ENCODE measurements at regions of chr14 and their contacts with region 1.

Region 1: GRCh38 chr14:67704484-67705089 is 2.9 kb downstream of the RDH12 start:
- DNase-seq: peak; percentile 30
- H3K4me3 Mint-ChIP-seq: no peak overlapping the region
- H3K27ac Mint-ChIP-seq: no peak overlapping the region
- H3K4me1 Mint-ChIP-seq: no peaks in the 10 kb centered on the region
- H3K27me3 Mint-ChIP-seq: peaks cover 14% of the 10 kb centered on the region

Region 2: DNA sequence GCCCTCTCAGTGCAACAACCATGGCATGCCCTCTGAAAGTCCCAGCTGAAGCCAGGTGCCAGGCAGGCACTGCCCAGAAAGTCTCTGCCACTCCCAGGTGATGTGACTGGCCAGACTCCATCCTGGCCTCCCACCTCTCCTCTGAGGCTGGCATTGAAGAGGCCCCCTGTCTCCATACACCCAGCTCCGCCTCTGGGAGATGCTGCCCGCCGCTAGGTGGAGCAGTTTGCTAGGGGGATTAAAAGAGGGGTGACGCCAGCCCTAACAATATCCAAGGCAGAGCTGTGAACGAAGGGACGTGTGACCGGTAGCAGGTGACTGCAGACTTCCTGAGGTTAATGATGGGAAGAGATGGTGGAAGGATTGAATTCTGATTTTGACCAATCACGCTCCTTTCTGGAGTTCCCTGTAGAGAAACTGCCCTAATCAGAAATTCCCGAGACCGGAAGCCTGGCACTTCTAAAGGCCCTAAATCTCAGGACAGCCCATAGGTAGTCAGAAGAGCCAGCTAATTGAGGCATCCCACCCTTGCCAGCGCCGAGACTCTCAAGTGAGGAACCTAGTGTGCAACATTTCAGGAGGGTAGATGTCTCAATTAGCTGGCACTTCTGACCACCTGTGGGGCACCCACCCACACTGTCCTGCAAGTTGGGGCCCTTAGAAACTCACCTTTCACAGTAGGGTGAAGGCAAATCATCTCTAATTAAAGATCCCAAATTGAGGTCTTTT is 284.3 kb before region 1 on chr14:
- CTCF ChIA-PET with region 1: interaction called, 11 read pairs
- POLR2A ChIA-PET with region 1: no interaction called
- DNase-seq: peak; percentile 50
- H3K4me3 Mint-ChIP-seq: no peak overlapping the region
- H3K27ac Mint-ChIP-seq: no peak overlapping the region
- H3K4me1 Mint-ChIP-seq: peaks cover 5% of the 10 kb centered on the region
- H3K27me3 Mint-ChIP-seq: peaks cover 12% of the 10 kb centered on the region

Region 3: DNA sequence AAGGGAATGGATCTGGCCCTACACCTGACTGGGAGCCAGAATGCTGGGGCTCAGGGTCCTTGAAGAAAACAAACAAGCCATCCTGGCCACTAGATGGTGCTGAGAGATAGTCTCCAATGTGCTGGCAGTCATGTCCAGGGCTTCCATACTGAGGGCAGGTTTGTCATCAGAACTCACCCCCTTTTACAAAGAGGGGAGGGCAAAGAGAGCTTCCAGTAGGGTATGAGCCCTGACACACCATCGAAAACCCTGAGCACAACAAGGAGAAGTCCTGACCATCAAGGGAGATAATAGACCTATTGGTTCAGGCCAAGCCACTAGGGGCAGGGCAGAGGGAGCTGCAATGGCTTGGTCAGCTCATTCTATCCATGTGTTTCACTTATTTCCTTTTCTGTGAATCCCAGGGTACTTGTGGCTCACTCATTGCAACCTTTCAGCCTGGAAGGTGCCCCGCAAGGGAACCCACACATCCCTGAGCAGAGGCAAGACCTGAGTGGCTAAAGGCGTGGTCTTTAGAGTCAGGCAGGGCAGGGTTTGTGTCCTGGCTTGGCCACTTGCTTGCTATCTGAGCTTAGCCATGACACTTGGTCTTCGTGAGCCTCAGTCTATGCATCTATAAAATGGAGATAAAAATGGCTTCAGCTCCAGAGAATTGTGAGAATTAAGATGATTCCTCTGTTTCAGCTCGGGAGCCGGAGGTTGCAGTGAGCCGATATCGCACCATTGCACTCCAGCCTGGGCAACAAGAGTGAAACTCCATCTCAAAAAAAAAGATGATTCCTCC is 177.7 kb before region 1 on chr14:
- CTCF ChIA-PET with region 1: interaction called, 13 read pairs
- POLR2A ChIA-PET with region 1: no interaction called
- DNase-seq: peak; percentile 42
- H3K4me3 Mint-ChIP-seq: no peak overlapping the region
- H3K27ac Mint-ChIP-seq: no peak overlapping the region
- H3K4me1 Mint-ChIP-seq: no peaks in the 10 kb centered on the region
- H3K27me3 Mint-ChIP-seq: peaks cover 62% of the 10 kb centered on the region

Region 4: GRCh38 chr14:67583711-67584644 is 120.6 kb before region 1 on chr14:
- CTCF ChIA-PET with region 1: interaction called, 25 read pairs
- POLR2A ChIA-PET with region 1: no interaction called
- DNase-seq: peak; percentile 26
- H3K4me3 Mint-ChIP-seq: no peak overlapping the region
- H3K27ac Mint-ChIP-seq: no peak overlapping the region
- H3K4me1 Mint-ChIP-seq: peaks cover 12% of the 10 kb centered on the region
- H3K27me3 Mint-ChIP-seq: no peaks in the 10 kb centered on the region

Region 5: GRCh38 chr14:67619446-67620216 is 85.0 kb before region 1 on chr14 and contains the start of gene ARG2:
- CTCF ChIA-PET with region 1: interaction called, 88 read pairs
- POLR2A ChIA-PET with region 1: interaction called, 6 read pairs
- DNase-seq: peak; percentile 96
- H3K4me3 Mint-ChIP-seq: peak within 1 kb of the TSS; percentile 78
- H3K27ac Mint-ChIP-seq: peak within 1 kb of the TSS; percentile 59
- H3K4me1 Mint-ChIP-seq: peaks cover 32% of the 10 kb centered on the region
- H3K27me3 Mint-ChIP-seq: peaks cover 17% of the 10 kb centered on the region
- total RNA-seq, gene ARG2: 6.8 to 7.7 TPM

Region 6: DNA sequence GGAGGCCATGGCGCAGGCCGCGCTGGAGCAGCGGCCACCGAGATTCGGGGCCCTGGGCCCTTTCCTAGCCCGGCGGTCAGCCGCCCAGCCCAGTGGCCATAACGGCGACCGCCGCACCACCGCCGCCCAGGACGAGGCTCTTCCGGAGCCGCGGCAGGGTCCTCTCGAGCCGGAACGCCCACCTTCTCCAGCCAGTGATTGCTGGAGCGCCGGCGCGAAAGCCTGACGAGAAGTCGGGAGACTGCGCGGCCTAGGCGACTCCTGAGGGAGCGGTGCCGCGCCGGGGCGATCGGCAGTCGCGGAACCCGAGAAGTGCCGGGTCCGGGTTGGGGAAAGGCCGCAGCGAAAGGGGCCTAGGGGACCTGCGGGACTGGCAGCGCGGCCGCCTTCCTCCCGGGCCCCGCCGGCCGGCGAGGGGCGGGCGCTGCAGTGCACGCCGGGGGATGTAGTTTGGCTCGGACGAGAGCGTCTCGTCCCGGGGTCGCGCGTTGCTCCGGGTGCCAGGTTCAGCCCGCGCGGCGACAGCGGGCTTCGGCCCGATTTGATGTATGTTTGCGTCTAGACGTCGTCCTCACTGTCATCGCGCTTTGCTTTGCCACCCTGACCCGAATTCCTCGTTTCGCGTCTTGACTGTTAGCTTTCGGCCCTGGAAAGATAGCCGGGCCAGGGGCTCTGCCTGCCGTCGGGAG is 30.0 kb before region 1 on chr14 and contains the start of gene VTI1B:
- CTCF ChIA-PET with region 1: interaction called, 11 read pairs
- POLR2A ChIA-PET with region 1: interaction called, 4 read pairs
- DNase-seq: peak; percentile 77
- H3K4me3 Mint-ChIP-seq: peak within 1 kb of the TSS; percentile 80
- H3K27ac Mint-ChIP-seq: peak within 1 kb of the TSS; percentile 75
- H3K4me1 Mint-ChIP-seq: peaks cover 32% of the 10 kb centered on the region
- H3K27me3 Mint-ChIP-seq: no peaks in the 10 kb centered on the region
- total RNA-seq, gene VTI1B: 73.3 to 77.3 TPM